Calu3 (cell line): ENCODE measurements at regions of chr6 and their contacts with region 1.

Region 1: DNA sequence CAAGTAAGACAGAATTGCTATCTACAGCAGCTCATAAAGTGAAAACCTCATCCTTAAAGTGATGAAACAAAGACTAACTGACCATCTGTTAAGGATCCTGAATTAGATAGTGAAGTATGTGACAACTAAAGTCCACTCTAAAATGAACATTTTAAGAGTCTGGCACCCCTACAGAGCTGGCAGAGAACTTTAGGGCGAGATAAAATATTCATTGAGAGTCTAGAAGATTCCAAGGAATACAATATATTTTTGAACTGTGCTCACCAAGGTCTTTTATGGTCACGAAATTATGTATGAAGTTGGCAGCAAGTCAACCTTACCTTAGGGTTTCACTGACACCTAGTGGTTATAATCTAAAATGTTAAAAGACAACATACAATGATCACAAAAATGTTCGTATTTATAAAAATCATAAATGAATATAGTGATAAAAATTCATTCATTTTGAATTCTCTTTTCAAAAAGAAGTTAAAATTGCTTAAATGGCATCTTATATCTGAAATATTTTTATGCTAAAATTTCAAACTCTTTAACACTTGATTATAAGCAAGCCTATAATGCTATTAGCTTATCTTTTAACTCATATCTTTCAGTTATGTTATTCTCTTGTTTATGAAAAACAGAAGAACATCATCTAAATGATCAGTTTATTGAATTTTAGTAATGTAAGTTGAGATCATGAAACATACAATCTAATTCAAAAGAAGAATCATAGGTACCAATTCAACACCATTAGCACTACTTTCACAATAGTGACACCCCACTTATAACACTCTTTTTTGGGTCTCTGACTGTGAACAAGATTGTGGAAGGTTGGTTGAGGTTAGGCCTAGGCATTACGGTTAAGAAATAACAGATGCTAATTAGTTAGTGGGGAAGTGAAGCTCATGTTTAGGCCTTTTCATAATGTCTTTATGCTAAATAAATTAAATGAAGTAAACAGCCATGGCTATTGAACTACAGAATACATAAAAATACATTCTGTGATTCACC is 27.5 kb downstream of the RSPH3 start:
- DNase-seq: no peak
- H3K4me3 Mint-ChIP-seq: no peak overlapping the region
- H3K27ac Mint-ChIP-seq: peak overlapping the region; percentile 53
- H3K4me1 Mint-ChIP-seq: peaks cover 18% of the 10 kb centered on the region
- H3K27me3 Mint-ChIP-seq: no peaks in the 10 kb centered on the region
- CTCF ChIP-seq: peak; percentile 37

Region 2: GRCh38 chr6:158704181-158704822 is 268.2 kb before region 1 on chr6:
- CTCF ChIA-PET with region 1: interaction called, 3 read pairs
- intact Hi-C with region 1: loop called (anchors 1 kb)
- DNase-seq: peak; percentile 91
- H3K4me3 Mint-ChIP-seq: peak overlapping the region; percentile 69
- H3K27ac Mint-ChIP-seq: peak overlapping the region; percentile 80
- H3K4me1 Mint-ChIP-seq: peaks cover 49% of the 10 kb centered on the region
- H3K27me3 Mint-ChIP-seq: no peaks in the 10 kb centered on the region
- CTCF ChIP-seq: peak; percentile 97

Region 3: GRCh38 chr6:158799051-158799792 is 173.3 kb before region 1 on chr6:
- CTCF ChIA-PET with region 1: interaction called, 7 read pairs
- intact Hi-C with region 1: loop called (anchors 5 kb)
- DNase-seq: peak; percentile 72
- H3K4me3 Mint-ChIP-seq: peak overlapping the region; percentile 85
- H3K27ac Mint-ChIP-seq: peak overlapping the region; percentile 94
- H3K4me1 Mint-ChIP-seq: peaks cover 64% of the 10 kb centered on the region
- H3K27me3 Mint-ChIP-seq: no peaks in the 10 kb centered on the region
- CTCF ChIP-seq: no peak

Region 4: DNA sequence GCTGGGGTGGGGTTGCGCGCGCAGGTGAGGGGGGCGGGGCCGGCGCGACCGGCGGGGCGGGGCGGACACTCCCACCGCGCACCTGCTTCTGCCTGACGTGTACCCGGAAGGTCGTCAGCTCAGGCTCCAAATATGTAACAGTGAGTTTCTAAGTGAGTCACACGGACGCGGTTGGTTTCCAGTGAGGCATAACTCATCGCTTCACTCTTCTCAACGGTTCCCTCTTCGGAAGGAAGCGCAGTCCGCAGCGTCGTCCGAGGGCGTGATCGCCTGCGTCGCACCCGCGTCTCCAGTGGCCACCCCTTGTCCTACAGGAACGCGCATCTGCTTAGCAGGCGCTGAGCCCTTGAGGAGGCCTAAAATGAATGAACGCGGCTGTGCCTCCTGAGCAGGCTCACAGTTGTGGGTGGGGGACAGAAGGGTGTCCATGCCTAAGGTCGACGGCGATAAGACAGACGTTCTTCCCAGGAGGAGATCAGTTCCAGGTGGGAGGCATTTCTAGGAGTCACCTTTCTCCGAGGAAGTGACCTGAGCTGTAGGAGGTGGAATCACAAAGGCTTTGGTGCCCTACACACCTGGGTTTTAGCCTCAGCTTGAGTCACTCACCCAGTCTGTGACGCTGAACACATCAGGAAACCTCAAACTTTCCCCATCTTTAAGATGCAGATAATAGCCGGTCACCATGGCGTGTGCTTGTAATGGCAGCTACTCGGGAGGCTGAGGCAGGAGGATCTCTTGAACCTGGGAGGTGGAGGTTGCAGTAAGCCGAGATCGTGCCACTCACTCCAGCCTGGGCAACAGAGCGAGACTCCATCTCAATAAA is 102.5 kb before region 1 on chr6:
- CTCF ChIA-PET with region 1: interaction called, 4 read pairs
- intact Hi-C with region 1: loop called (anchors 5 kb)
- DNase-seq: peak; percentile 92
- H3K4me3 Mint-ChIP-seq: peak overlapping the region; percentile 70
- H3K27ac Mint-ChIP-seq: peak overlapping the region; percentile 99
- H3K4me1 Mint-ChIP-seq: peaks cover 33% of the 10 kb centered on the region
- H3K27me3 Mint-ChIP-seq: no peaks in the 10 kb centered on the region
- CTCF ChIP-seq: no peak

Region 5: DNA sequence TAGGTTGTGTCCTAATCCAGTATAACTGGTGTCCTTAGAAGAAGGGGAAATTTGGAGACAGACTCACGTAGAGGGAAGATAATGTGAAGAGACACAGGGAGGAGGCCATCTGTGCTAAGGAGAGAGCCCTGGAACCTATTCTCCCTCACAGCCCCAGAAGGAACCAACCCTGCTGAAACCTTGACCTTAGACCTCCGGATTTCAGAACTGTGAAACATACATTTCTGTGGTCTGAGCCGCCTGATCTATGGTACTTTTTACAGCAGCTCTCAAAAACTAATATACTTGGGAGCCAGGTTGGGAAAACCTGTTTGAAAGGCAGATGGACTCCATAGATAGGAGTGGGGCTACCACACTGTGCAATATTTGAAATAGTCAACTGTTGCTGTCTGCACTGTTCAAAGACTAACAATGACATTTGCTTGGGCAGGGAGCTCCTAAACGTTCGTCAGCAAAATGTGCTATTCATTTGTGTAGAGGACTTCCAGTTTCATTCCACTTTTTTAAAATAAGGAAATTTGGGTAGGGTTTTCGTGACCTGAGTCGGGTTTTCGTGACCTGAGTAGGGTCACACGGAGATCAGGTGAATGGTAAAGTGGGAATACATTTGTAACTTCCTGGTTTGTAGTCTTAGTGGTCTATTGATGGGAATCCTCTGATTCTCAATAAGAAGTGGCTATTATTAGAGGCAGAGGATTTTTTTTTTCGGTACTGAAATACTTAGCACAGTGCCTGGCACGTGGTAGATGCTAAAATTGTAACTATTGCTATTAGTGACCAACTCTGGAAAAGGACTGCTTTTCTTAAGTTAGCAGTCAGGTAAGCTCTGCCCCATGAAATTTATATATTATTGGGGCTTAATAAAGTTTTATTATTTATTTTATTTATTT is 60.9 kb after region 1 on chr6:
- CTCF ChIA-PET with region 1: no interaction called
- intact Hi-C with region 1: no loop called
- DNase-seq: no peak
- H3K4me3 Mint-ChIP-seq: no peak overlapping the region
- H3K27ac Mint-ChIP-seq: no peak overlapping the region
- H3K4me1 Mint-ChIP-seq: peaks cover under 1% of the 10 kb centered on the region
- H3K27me3 Mint-ChIP-seq: no peaks in the 10 kb centered on the region
- CTCF ChIP-seq: no peak